Activated CD4-positive, alpha-beta memory T cell treated with anti-CD3 and anti-CD28 coated beads for 36 hours (primary cell): ENCODE measurements at regions of chr12 and their contacts with region 1.

Region 1: GRCh38 chr12:64759035-64759901 is at the start of gene GNS:
- DNase-seq: peak; percentile 97
- H3K4me3 Mint-ChIP-seq: peak within 1 kb of the TSS; percentile 85
- H3K27ac Mint-ChIP-seq: peak within 1 kb of the TSS; percentile 90
- H3K4me1 Mint-ChIP-seq: peaks cover 43% of the 10 kb centered on the region
- H3K27me3 Mint-ChIP-seq: no peaks in the 10 kb centered on the region
- total RNA-seq, gene GNS: 21.2 to 23.1 TPM

Region 2: GRCh38 chr12:64451687-64452558 is 307.3 kb before region 1 on chr12 and contains the start of gene TBK1:
- CTCF ChIA-PET with region 1: no interaction called
- POLR2A ChIA-PET with region 1: no interaction called
- intact Hi-C with region 1: loop called (anchors 2 kb)
- DNase-seq: peak; percentile 77
- H3K4me3 Mint-ChIP-seq: peak within 1 kb of the TSS; percentile 96
- H3K27ac Mint-ChIP-seq: peak within 1 kb of the TSS; percentile 95
- H3K4me1 Mint-ChIP-seq: peaks cover 42% of the 10 kb centered on the region
- H3K27me3 Mint-ChIP-seq: no peaks in the 10 kb centered on the region
- total RNA-seq, gene TBK1: 21.7 to 23.4 TPM

Region 3: DNA sequence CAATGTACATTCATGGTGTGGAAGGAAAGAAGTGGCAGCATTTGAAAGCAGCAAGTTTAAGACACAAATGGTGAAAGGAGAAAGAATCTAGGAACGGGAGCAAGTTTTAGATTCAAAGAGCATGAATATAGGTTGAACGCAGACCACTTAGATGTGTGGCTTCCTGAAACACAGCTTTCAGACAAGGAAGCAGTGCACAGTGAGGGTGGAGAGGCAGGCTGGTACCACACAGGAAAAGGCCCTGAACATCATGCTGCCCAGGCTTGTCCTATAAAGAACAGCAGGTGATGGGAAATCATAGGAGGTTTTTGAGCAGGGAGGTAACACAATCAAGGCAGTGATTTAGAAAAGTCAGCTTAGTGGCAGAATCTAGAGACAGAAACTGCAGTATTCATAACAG is 35.6 kb before region 1 on chr12:
- CTCF ChIA-PET with region 1: no interaction called
- POLR2A ChIA-PET with region 1: no interaction called
- intact Hi-C with region 1: no loop called
- DNase-seq: no peak
- H3K4me3 Mint-ChIP-seq: no peak overlapping the region
- H3K27ac Mint-ChIP-seq: no peak overlapping the region
- H3K4me1 Mint-ChIP-seq: peaks cover 5% of the 10 kb centered on the region
- H3K27me3 Mint-ChIP-seq: no peaks in the 10 kb centered on the region

Region 4: DNA sequence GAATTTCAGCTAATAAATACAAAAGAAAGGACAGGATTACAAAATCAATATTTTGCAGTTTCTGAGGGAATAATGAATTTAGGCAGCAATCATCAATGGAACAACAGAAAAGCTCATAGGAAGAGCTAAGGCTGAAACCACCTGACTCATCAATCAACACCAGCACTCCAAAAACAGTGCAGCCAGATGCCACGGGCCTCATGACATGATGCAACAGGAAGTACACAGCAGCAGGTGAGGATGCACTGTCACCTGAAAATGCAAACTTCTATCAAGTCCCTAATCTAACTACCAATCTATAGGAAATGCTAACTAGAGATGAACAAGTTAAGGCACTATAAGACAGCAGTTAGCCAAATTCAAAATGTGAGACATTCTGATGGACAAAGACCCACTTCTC is 21.7 kb before region 1 on chr12:
- CTCF ChIA-PET with region 1: no interaction called
- POLR2A ChIA-PET with region 1: interaction called, 3 read pairs
- intact Hi-C with region 1: loop called (anchors 2 kb)
- DNase-seq: peak; percentile 65
- H3K4me3 Mint-ChIP-seq: no peak overlapping the region
- H3K27ac Mint-ChIP-seq: peak overlapping the region; percentile 82
- H3K4me1 Mint-ChIP-seq: peaks cover 22% of the 10 kb centered on the region
- H3K27me3 Mint-ChIP-seq: no peaks in the 10 kb centered on the region

Region 5: GRCh38 chr12:64746663-64747062 is 12.6 kb before region 1 on chr12:
- CTCF ChIA-PET with region 1: no interaction called
- POLR2A ChIA-PET with region 1: interaction called, 4 read pairs
- intact Hi-C with region 1: loop called (anchors 1 kb)
- DNase-seq: no peak
- H3K4me3 Mint-ChIP-seq: no peak overlapping the region
- H3K27ac Mint-ChIP-seq: no peak overlapping the region
- H3K4me1 Mint-ChIP-seq: peaks cover 12% of the 10 kb centered on the region
- H3K27me3 Mint-ChIP-seq: no peaks in the 10 kb centered on the region

Region 6: DNA sequence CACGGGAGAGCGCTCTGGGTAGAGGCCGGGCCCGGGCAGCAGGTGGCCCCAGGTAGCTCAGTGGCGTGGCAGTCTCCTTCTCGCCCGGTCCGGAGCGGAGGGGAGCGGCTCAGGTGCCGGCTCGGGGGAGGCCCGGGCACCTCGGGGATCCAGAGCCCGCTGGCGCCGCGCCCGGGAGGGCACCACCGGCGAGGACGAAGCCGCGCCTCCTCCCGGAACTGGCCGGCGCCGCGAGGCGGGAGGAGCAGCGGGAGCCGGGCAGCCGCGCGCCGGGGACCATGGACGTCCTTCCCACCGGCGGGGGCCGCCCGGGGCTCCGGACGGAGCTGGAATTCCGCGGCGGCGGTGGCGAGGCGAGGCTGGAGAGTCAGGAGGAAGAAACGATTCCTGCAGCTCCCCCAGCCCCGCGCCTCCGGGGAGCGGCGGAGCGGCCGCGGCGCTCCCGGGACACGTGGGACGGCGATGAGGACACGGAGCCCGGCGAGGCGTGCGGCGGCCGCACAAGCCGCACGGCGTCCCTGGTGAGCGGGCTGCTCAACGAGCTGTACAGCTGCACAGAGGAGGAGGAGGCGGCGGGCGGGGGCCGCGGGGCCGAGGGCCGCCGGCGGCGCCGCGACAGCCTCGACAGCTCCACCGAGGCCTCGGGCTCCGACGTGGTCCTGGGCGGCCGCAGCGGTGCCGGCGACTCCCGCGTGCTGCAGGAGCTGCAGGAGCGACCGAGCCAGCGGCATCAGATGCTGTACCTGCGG is 21.4 kb after region 1 on chr12:
- CTCF ChIA-PET with region 1: no interaction called
- POLR2A ChIA-PET with region 1: no interaction called
- intact Hi-C with region 1: no loop called
- DNase-seq: peak; percentile 21
- H3K4me3 Mint-ChIP-seq: peak overlapping the region; percentile 36
- H3K27ac Mint-ChIP-seq: no peak overlapping the region
- H3K4me1 Mint-ChIP-seq: peaks cover 16% of the 10 kb centered on the region
- H3K27me3 Mint-ChIP-seq: peaks cover 64% of the 10 kb centered on the region